PC-3 (cell line): ENCODE measurements at regions of chr18 and their contacts with region 1.

Region 1: DNA sequence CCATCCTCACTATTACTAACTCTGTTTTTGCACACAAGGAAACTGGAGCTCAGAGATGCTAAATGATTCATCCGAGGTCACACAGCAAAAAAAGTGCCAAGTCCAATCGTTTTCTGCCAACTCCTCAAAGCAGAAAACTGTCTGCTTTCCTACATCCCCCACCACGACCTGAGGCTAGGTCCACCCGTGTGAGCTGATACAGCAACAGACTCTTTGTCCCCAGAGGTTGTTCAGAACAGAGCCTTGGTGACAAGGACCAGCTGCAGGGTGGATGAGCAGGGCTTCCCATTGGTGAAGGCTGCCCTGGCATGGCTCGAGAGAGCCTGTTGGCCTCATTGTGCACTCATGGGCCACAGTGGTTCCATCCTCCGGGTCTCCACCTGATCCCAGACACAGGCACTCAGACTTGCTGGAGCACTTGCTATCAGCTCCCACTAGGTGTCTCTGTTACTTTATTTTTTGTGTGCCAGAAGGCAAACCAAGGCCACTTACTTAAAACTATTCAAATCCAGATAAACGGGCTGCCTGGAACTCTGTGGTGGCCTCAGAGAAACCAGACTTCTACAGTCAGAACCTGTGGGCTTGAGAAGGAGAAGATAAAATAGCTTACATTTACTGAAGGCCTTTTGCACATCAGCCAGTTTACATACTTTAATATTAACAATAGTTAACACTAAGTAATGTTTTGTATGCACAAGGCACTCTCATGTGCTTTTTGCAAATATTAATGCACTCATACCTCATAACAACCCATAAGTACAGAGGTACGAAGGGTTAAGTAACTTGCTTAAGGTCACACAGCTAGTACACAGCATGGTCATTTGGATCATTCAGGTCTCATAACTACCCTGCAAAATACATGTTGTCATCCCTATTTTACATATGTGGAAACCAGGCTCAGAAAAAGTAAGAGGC is 62.9 kb upstream of the CTIF start:
- DNase-seq: peak; percentile 63
- ATAC-seq: peak; percentile 90
- H3K4me3 ChIP-seq: no peak overlapping the region
- H3K27ac ChIP-seq: no peak overlapping the region
- H3K4me1 ChIP-seq: no peaks in the 10 kb centered on the region
- H3K27me3 ChIP-seq: no peaks in the 10 kb centered on the region
- CTCF ChIP-seq: peak; percentile 69

Region 2: DNA sequence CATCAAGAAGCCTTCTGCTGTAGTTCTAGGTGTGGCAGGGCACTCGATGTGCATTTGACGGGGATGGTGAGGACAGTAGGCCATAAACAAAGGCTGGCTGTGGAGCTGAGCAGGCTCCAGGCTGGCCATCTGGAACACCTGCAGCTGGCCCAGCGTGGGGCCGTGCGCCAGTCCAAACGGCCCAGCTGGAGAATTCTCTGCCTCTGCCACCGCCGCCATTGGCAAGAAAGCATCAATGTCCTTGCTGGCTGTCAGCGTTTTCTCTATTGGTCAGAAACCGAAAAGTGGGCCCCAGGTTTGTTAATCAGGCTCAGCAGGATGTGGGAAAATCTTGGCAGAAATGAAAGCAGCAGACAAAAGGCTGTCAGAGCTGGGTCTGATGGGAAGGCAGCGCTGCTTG is 38.9 kb after region 1 on chr18:
- CTCF ChIA-PET with region 1: no interaction called
- POLR2A ChIA-PET with region 1: no interaction called
- intact Hi-C with region 1: no loop called
- DNase-seq: no peak
- ATAC-seq: no peak
- H3K4me3 ChIP-seq: no peak overlapping the region
- H3K27ac ChIP-seq: no peak overlapping the region
- H3K4me1 ChIP-seq: no peaks in the 10 kb centered on the region
- H3K27me3 ChIP-seq: no peaks in the 10 kb centered on the region
- CTCF ChIP-seq: no peak

Region 3: GRCh38 chr18:48540251-48541025 is 64.5 kb after region 1 on chr18:
- CTCF ChIA-PET with region 1: no interaction called
- POLR2A ChIA-PET with region 1: no interaction called
- intact Hi-C with region 1: loop called (anchors 10 kb)
- DNase-seq: peak; percentile 29
- ATAC-seq: peak; percentile 37
- H3K4me3 ChIP-seq: peak overlapping the region; percentile 76
- H3K27ac ChIP-seq: no peak overlapping the region
- H3K4me1 ChIP-seq: peaks cover 23% of the 10 kb centered on the region; the same call in 1 of the 2 replicates
- H3K27me3 ChIP-seq: no peaks in the 10 kb centered on the region
- CTCF ChIP-seq: no peak

Region 4: GRCh38 chr18:48580782-48581181 is 104.9 kb after region 1 on chr18:
- CTCF ChIA-PET with region 1: no interaction called
- POLR2A ChIA-PET with region 1: no interaction called
- intact Hi-C with region 1: no loop called
- DNase-seq: no peak
- ATAC-seq: no peak
- H3K4me3 ChIP-seq: no peak overlapping the region
- H3K27ac ChIP-seq: no peak overlapping the region
- H3K4me1 ChIP-seq: no peaks in the 10 kb centered on the region
- H3K27me3 ChIP-seq: no peaks in the 10 kb centered on the region
- CTCF ChIP-seq: no peak

Region 5: DNA sequence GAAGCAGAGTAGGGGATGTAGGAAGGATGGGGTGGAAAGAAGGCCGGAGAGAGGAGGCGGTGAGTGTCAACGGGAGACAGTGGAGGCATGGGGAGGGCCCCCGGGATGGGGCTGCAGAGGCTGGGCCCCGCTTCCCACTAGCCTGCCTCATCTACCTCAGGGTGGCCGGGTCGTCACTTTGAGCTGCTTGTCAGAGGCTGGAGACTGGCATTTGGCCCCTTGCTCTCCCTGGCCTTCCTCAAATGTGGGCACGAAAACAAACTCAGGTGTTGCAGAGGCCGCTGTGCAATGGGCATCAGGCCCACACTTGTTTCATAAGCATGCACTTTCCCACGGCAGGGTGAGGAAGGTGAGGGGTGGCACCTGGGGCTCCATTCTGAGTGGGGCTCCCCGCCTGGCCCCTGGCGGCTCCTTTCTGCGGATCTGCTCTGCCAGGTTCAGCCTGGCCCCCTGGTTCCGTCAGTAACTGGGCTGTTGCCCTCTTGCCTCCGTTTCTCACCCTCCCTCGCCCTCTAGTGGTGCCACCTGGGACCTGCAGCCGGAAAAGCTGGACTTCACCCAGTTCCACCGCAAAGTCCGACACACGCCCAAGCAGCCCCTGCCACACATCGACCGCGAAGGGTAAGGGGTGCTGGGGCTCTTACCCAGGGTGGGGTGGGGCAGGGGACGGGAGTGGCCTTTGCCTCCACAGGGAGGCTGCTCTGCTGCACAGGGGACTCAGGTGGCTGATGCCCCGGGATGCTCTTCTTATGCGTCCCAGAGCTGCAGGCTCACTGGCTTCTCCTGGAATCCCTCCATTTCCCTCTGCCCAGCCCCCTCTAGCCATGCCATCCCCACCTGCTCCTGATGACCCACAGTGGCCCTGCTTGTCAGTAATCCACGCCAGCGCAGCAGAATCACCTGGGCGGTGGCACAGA is 188.3 kb after region 1 on chr18:
- CTCF ChIA-PET with region 1: interaction called, 5 read pairs
- POLR2A ChIA-PET with region 1: no interaction called
- intact Hi-C with region 1: loop called (anchors 1 kb)
- DNase-seq: peak; percentile 48
- ATAC-seq: peak; percentile 53; the same call in 1 of the 2 replicates
- H3K4me3 ChIP-seq: no peak overlapping the region
- H3K27ac ChIP-seq: no peak overlapping the region
- H3K4me1 ChIP-seq: no peaks in the 10 kb centered on the region
- H3K27me3 ChIP-seq: no peaks in the 10 kb centered on the region
- CTCF ChIP-seq: peak; percentile 59